CD8-positive, alpha-beta T cell (primary cell): ENCODE measurements at regions of chr3 and their contacts with region 1.

Region 1: GRCh38 chr3:177109688-177110330 is 87.5 kb downstream of the TBL1XR1 start:
- DNase-seq: peak in 2 of 9 experiments; percentile 30 to 63
- ATAC-seq: peak; percentile 95
- H3K4me3 ChIP-seq: no peak overlapping the region
- H3K4me3 Mint-ChIP-seq: peak overlapping the region; percentile 33
- H3K27ac ChIP-seq: peak overlapping the region; percentile 18 to 27
- H3K27ac Mint-ChIP-seq: peak overlapping the region; percentile 90
- H3K4me1 ChIP-seq: peaks cover 46% of the 10 kb centered on the region
- H3K4me1 Mint-ChIP-seq: peaks cover 76% of the 10 kb centered on the region
- H3K27me3 ChIP-seq: no peaks in the 10 kb centered on the region
- H3K27me3 Mint-ChIP-seq: no peaks in the 10 kb centered on the region
- CTCF ChIP-seq: no peak

Region 2: GRCh38 chr3:177057768-177058167 is 52.0 kb before region 1 on chr3:
- CTCF ChIA-PET with region 1: no interaction called
- POLR2A ChIA-PET with region 1: interaction called, 3 read pairs
- intact Hi-C with region 1: loop called in 1 of 2 experiments (anchors 2 kb)
- DNase-seq: peak in 6 of 9 experiments; percentile 21 to 57 (median 36)
- ATAC-seq: peak; percentile 93
- H3K4me3 ChIP-seq: peak overlapping the region in 1 of 2 experiments; percentile 6
- H3K4me3 Mint-ChIP-seq: no peak overlapping the region
- H3K27ac ChIP-seq: peak overlapping the region in 1 of 2 experiments; percentile 2
- H3K27ac Mint-ChIP-seq: no peak overlapping the region
- H3K4me1 ChIP-seq: peaks cover 15% of the 10 kb centered on the region
- H3K4me1 Mint-ChIP-seq: peaks cover 45% of the 10 kb centered on the region
- H3K27me3 ChIP-seq: no peaks in the 10 kb centered on the region
- H3K27me3 Mint-ChIP-seq: no peaks in the 10 kb centered on the region
- CTCF ChIP-seq: no peak

Region 3: DNA sequence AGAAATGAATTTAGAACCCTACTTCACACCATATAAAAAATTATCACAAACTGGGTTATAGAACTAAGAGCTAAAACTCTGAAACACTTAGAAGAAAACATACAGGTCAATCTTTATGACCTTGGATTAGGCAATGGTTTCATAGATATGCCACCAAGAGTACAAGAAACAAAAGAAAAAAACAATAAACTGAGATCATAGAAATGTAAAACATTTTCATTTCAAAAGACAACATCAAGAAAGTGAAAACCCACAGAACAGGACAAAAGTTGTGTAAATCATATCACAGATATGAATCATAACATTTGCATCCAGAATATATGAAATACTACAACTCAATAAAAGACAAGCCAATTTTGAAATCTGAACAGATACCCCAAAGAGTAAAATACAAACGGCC is 15.1 kb after region 1 on chr3:
- CTCF ChIA-PET with region 1: no interaction called
- POLR2A ChIA-PET with region 1: interaction called, 7 read pairs
- intact Hi-C with region 1: loop called in 1 of 2 experiments (anchors 2 kb)
- DNase-seq: no peak
- ATAC-seq: no peak
- H3K4me3 ChIP-seq: no peak overlapping the region
- H3K4me3 Mint-ChIP-seq: no peak overlapping the region
- H3K27ac ChIP-seq: no peak overlapping the region
- H3K27ac Mint-ChIP-seq: peak overlapping the region; percentile 13
- H3K4me1 ChIP-seq: peaks cover 13% of the 10 kb centered on the region
- H3K4me1 Mint-ChIP-seq: peaks cover 88% of the 10 kb centered on the region
- H3K27me3 ChIP-seq: no peaks in the 10 kb centered on the region
- H3K27me3 Mint-ChIP-seq: no peaks in the 10 kb centered on the region
- CTCF ChIP-seq: no peak